ENCODE measurements at regions of chr12 and their contacts with region 1.

Region 1: DNA sequence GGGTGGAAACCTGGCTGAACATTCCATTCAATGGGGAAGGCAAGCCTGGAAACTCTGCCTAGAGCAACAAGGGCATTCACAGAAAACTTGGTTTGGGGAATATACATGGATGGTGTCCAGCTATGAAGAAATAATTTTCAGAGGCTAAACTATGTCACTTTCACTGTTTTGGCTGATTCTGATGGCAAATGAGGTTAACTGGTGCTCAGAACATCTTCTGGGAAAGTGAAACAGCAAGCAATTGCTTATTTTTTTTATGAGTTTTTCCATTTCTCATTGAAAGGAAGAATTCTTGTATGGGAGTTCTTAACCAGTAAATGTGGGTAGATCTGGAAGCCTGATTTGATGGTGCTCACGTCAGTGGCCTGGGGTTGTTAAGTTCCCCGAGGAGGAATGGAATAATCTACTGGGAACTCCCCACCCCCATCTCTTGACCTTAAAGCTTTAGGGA is 132.8 kb upstream of the BTG1 start:
- DNase-seq: no peak
- ATAC-seq: no peak
- H3K4me3 ChIP-seq: no peak overlapping the region
- H3K4me3 Mint-ChIP-seq: no peak overlapping the region
- H3K27ac ChIP-seq: no peak overlapping the region
- H3K27ac Mint-ChIP-seq: peak overlapping the region in 1 of 9 donors; percentile 8
- H3K4me1 ChIP-seq: no peaks in the 10 kb centered on the region
- H3K4me1 Mint-ChIP-seq: peaks cover 8 to 26% (median 22%) of the 10 kb centered on the region in 7 donors
- H3K27me3 ChIP-seq: no peaks in the 10 kb centered on the region
- H3K27me3 Mint-ChIP-seq: no peaks in the 10 kb centered on the region

Region 2: DNA sequence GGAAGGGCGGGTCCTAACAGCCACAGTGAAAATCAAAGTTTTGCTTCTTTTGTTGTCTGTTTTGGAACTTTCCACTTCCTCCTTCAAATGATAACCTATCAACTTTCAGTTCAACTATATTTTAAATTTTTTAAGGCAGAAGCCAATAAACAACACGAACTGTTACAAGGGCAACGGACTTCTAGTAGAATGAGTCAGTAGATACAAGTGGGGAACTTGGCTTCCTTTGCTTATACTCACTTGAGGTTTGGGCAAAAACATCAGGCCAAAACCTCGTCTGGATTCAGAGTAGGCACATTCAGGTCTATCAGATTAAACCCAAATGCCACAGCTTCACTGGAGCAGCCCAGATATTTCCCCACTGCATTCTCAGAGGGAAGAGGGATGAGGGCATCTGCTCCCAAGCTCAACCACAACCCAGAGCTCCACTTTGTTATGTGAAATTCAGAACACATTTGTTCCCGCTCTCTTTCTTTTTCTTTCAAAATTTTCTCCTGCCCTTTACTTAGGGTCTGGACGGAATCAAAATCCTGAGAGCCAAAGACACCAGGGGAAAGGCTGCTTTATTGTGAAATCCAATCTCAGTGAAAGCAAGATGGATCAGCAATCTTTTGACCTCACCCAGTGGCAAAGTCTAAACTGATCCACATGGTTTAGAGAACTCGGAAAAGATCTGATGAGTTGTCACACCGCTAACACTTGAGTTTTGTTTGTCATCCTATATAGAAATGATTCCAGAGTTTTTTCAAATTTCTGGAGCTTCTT is 19.7 kb after region 1 on chr12:
- CTCF ChIA-PET with region 1: no interaction called
- POLR2A ChIA-PET with region 1: interaction called, 10 read pairs
- intact Hi-C with region 1: no loop called
- DNase-seq: peak in 7 of 9 donors; percentile 29 to 75 (median 58)
- ATAC-seq: peak; percentile 83
- H3K4me3 ChIP-seq: no peak overlapping the region
- H3K4me3 Mint-ChIP-seq: peak overlapping the region in 9 of 10 donors; percentile 9 to 80 (median 63)
- H3K27ac ChIP-seq: peak overlapping the region; percentile 57
- H3K27ac Mint-ChIP-seq: peak overlapping the region in 2 of 9 donors; percentile 85 to 96
- H3K4me1 ChIP-seq: peaks cover 17 to 42% of the 10 kb centered on the region in 2 donors
- H3K4me1 Mint-ChIP-seq: peaks cover 8 to 33% (median 27%) of the 10 kb centered on the region in 7 donors
- H3K27me3 ChIP-seq: no peaks in the 10 kb centered on the region
- H3K27me3 Mint-ChIP-seq: no peaks in the 10 kb centered on the region

Measured in naive thymus-derived CD4-positive, alpha-beta T cell (primary cell).